Gastrocnemius medialis (tissue), 4 donors: ENCODE measurements at regions of chr5 and their contacts with region 1.

Region 1: DNA sequence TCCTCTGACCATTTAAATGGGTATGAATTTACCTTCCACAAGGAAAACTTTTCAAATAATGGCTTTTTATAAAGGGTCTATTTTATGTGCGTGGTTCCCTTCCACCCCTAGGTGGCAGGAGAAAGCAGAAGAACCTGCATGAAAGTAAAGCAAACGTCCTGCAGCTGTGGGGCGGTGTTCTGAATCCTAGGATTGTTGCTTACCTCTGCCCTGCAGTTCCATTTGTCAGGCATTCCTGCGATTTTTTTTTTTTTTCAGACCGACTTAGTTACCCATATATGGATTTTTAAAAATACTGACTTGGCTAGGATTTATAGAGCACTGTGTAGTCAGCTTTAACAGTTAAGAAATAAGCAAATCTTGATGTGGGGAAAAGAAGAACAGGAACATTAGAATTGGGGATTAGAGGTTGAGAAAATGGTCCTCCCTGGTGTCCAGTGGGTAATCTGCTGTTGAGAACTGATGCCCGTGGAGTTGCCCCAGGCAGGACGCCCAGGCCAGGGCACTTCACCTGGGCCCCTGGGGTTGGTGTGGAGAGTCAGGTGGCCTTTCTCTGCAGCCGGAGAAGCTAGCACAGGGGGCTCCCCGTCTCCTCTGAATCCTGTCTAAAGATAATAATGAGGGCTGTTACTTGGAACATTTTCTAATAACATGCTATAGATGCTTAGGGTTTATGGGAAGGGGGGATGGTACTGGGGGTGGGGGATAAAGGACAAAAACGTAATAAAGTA is 30.4 kb upstream of the LTC4S start:
- DNase-seq: peak; percentile 23 to 51
- ATAC-seq: peak; percentile 81 to 82
- H3K4me3 ChIP-seq: no peak overlapping the region
- H3K27ac ChIP-seq: peak overlapping the region; percentile 18 to 48 (median 26)
- H3K4me1 ChIP-seq: peaks cover 56 to 57% of the 10 kb centered on the region in 2 donors
- H3K27me3 ChIP-seq: no peaks in the 10 kb centered on the region
- CTCF ChIP-seq: peak; percentile 68 to 89 (median 74)
- POLR2A ChIP-seq: no peak

Region 2: DNA sequence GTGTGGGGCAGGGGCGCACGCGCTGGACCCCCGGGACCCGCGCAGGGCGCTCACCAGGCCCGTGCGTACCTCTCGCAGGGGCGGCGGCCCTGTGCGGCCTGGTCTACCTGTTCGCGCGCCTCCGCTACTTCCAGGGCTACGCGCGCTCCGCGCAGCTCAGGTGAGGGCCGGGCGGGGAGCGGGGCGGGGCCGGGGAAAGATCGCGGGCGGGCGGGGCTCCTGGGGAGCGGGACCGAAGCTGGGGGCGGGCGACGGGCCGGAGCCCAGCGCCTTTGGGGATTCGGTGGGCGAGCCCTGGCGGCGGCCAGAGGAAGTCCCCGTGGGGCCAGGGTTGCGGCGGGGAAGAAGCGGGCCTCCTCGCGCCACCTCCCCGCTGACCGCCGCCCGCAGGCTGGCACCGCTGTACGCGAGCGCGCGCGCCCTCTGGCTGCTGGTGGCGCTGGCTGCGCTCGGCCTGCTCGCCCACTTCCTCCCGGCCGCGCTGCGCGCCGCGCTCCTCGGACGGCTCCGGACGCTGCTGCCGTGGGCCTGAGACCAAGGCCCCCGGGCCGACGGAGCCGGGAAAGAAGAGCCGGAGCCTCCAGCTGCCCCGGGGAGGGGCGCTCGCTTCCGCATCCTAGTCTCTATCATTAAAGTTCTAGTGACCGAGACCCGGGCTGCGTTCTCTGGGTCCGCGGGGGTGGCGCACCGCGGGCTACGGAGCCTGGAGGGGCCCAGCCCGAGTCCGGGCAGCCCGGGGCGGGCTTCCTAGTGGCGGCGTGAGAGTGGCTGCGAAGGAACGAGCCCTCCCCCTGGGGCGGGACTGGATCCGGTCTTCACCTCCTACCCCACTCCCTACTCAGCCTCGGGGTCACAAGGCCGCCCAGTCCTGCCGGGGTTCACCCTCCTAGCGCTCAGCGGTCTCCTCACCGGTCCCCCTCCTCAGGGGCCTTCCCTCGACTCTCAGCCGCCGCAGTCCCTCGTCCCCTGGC is 32.8 kb after region 1 on chr5:
- in situ Hi-C with region 1: no loop called
- intact Hi-C with region 1: loop called (anchors 1 kb)
- DNase-seq: peak in 1 of 2 donors; percentile 68
- ATAC-seq: peak; percentile 74 to 84
- H3K4me3 ChIP-seq: peak overlapping the region; percentile 55 to 65 (median 60)
- H3K27ac ChIP-seq: peak overlapping the region; percentile 62 to 81 (median 76)
- H3K4me1 ChIP-seq: peaks cover 17 to 22% of the 10 kb centered on the region in 2 donors
- H3K27me3 ChIP-seq: no peaks in the 10 kb centered on the region
- CTCF ChIP-seq: peak; percentile 60 to 95 (median 84)
- POLR2A ChIP-seq: peak; percentile 45 to 46

Region 3: GRCh38 chr5:180090098-180090768 is 326.9 kb after region 1 on chr5:
- in situ Hi-C with region 1: loop called in 1 of 4 experiments (anchors 25 kb)
- intact Hi-C with region 1: no loop called
- DNase-seq: peak in 1 of 2 donors; percentile 36
- ATAC-seq: peak; percentile 68 to 79
- H3K4me3 ChIP-seq: peak overlapping the region; percentile 55 to 69 (median 62)
- H3K27ac ChIP-seq: peak overlapping the region; percentile 45 to 61 (median 57)
- H3K4me1 ChIP-seq: peaks cover 0 to 13% of the 10 kb centered on the region in 2 donors
- H3K27me3 ChIP-seq: no peaks in the 10 kb centered on the region
- CTCF ChIP-seq: peak; percentile 60 to 90 (median 78)
- POLR2A ChIP-seq: no peak